Activated CD4-positive, alpha-beta T cell treated with anti-CD3 and anti-CD28 coated beads, Interleukin-2, amount 10 ng/mL, durations not matched to agents 24 days and 14 days (primary cell): ENCODE measurements at regions of chr16 and their contacts with region 1.

Region 1: GRCh38 chr16:67246934-67247697 is at the start of gene FHOD1:
- DNase-seq: peak; percentile 100
- H3K4me3 Mint-ChIP-seq: peak within 1 kb of the TSS; percentile 89
- H3K27ac Mint-ChIP-seq: peak within 1 kb of the TSS; percentile 91
- H3K4me1 Mint-ChIP-seq: peaks cover 49% of the 10 kb centered on the region
- H3K27me3 Mint-ChIP-seq: peaks cover 14% of the 10 kb centered on the region
- total RNA-seq, gene FHOD1: 128 TPM in 2 replicates

Region 2: GRCh38 chr16:66911112-66911511 is 336.0 kb before region 1 on chr16:
- intact Hi-C with region 1: no loop called
- DNase-seq: no peak
- H3K4me3 Mint-ChIP-seq: no peak overlapping the region
- H3K27ac Mint-ChIP-seq: no peak overlapping the region
- H3K4me1 Mint-ChIP-seq: peaks cover 5% of the 10 kb centered on the region
- H3K27me3 Mint-ChIP-seq: peaks cover 6% of the 10 kb centered on the region

Region 3: GRCh38 chr16:67183627-67184328 is 63.3 kb before region 1 on chr16 and contains the start of gene MATCAP1:
- intact Hi-C with region 1: loop called (anchors 2 kb)
- DNase-seq: peak; percentile 98
- H3K4me3 Mint-ChIP-seq: no peak within 1 kb of the TSS
- H3K27ac Mint-ChIP-seq: peak within 1 kb of the TSS; percentile 45
- H3K4me1 Mint-ChIP-seq: peaks cover 19% of the 10 kb centered on the region
- H3K27me3 Mint-ChIP-seq: peaks cover 8% of the 10 kb centered on the region
- total RNA-seq, gene MATCAP1: 51.3 and 55.1 TPM in 2 replicates

Region 4: DNA sequence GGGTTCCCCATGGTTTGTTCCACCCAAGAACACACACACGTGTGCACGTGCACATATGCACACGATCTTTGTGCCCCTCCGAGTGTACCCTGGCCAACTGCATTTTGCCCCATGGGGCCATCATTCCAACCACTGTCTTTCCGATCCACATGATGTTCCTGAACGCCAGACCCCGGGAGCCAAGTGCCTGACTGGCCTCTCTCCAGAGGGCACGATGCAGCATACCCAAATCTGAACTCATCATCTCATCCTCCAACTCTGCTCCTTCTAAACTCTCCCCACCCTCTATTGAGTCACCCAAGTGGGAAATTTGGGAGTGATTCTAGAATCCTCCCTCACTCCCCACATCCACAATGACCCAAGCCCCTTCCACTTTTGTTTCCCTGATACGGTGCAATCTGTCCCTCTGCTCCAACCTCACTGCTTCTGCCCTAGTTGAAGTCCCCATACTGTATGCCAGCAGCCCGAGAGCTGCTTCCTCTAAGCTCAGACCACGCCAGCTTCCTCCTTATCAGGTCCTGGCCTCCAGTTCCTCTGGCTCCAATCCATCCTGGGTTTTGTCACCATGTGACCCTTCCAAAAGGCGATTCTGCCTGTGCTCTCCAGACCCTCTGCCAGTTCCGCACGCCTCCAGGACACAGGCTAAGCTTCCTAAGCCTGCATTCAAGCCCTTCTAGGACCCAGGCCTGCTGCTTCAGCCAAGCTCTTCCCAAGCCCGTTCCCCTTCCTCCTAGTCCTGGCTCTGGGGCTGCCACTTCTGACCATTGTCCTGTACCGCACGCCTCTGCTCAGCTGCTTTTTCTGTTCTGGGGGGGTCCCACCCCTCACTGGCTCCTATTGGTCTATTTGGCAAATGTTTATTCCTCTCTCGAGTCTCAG is 30.3 kb before region 1 on chr16:
- intact Hi-C with region 1: no loop called
- DNase-seq: no peak
- H3K4me3 Mint-ChIP-seq: no peak overlapping the region
- H3K27ac Mint-ChIP-seq: no peak overlapping the region
- H3K4me1 Mint-ChIP-seq: peaks cover 8% of the 10 kb centered on the region
- H3K27me3 Mint-ChIP-seq: no peaks in the 10 kb centered on the region

Region 5: GRCh38 chr16:67236563-67237395 is 10.3 kb before region 1 on chr16:
- intact Hi-C with region 1: loop called (anchors 1 kb)
- DNase-seq: peak; percentile 95
- H3K4me3 Mint-ChIP-seq: peak overlapping the region; percentile 58
- H3K27ac Mint-ChIP-seq: peak overlapping the region; percentile 90
- H3K4me1 Mint-ChIP-seq: peaks cover 13% of the 10 kb centered on the region
- H3K27me3 Mint-ChIP-seq: no peaks in the 10 kb centered on the region

Region 6: DNA sequence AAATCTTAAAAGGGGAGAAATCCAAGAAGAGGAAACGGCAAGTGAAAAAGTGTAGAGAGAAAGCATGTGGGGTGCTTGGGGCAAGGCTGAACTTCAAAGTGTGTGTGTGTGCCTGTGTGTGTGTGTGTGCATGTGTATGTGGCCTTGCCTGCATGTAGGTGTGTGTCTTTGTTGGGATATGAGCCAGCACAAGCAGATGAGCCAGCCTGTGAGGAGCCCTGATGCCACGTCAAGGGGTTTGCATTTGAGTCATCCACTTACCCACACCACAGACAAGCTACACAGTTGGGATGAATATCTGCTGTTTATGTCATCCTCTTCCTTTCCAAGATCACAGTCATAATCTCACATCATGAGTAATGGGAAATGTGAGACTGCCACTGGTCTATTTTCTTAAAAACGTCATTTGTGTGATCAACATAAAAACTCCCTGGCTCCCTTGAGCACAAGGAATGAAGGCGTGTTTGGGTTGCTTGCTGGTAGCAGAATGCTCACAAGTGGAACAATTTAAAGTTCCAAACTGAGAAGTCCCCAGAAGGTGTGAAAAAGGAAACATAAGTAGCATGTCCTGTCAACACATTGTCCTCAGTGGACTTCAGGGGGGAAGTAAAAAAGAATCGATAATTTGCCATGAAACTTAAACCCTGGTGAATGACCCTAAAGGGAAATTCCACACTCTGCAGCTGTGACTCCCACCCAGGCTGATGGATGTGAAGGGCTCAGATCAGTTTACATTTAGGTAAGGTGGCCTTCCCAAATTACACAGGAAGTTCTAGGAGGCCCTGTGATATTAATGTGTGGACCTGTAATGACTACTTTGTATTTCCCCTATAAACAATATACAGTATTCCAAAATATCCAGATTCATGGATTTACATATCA is 64.7 kb after region 1 on chr16:
- intact Hi-C with region 1: loop called (anchors 1 kb)
- DNase-seq: peak; percentile 91
- H3K4me3 Mint-ChIP-seq: peak overlapping the region; percentile 41
- H3K27ac Mint-ChIP-seq: peak overlapping the region; percentile 96
- H3K4me1 Mint-ChIP-seq: peaks cover 39% of the 10 kb centered on the region
- H3K27me3 Mint-ChIP-seq: no peaks in the 10 kb centered on the region

Region 7: GRCh38 chr16:67841764-67842508 is 594.8 kb after region 1 on chr16 and contains the start of gene THAP11:
- intact Hi-C with region 1: loop called (anchors 10 kb)
- DNase-seq: peak; percentile 99
- H3K4me3 Mint-ChIP-seq: peak within 1 kb of the TSS; percentile 93
- H3K27ac Mint-ChIP-seq: peak within 1 kb of the TSS; percentile 94
- H3K4me1 Mint-ChIP-seq: peaks cover 26% of the 10 kb centered on the region
- H3K27me3 Mint-ChIP-seq: no peaks in the 10 kb centered on the region
- total RNA-seq, gene THAP11: 46.4 and 48.7 TPM in 2 replicates